CD14-positive monocyte (primary cell): ENCODE measurements at regions of chr14 and their contacts with region 1.

Region 1: GRCh38 chr14:88013750-88014349 is 8.9 kb downstream of the GPR65 start:
- DNase-seq: peak; percentile 70 to 88 (median 85)
- H3K4me3 ChIP-seq: peak overlapping the region in 1 of 3 experiments; percentile 50
- H3K4me3 Mint-ChIP-seq: peak overlapping the region in 1 of 2 donors; percentile 51
- H3K27ac ChIP-seq: peak overlapping the region in 1 of 2 donors; percentile 65
- H3K27ac Mint-ChIP-seq: peak overlapping the region in 5 of 7 donors; percentile 69 to 87 (median 81)
- H3K4me1 ChIP-seq: peaks cover 42 to 62% of the 10 kb centered on the region in 2 donors
- H3K4me1 Mint-ChIP-seq: peaks cover 69% of the 10 kb centered on the region
- H3K27me3 ChIP-seq: no peaks in the 10 kb centered on the region
- H3K27me3 Mint-ChIP-seq: peaks cover 0 to 1% (median 0%) of the 10 kb centered on the region in 3 donors
- CTCF ChIP-seq: peak; percentile 95

Region 2: GRCh38 chr14:88026890-88027289 is 13.0 kb after region 1 on chr14:
- intact Hi-C with region 1: no loop called
- DNase-seq: no peak
- H3K4me3 ChIP-seq: no peak overlapping the region
- H3K4me3 Mint-ChIP-seq: peak overlapping the region; percentile 0 to 18
- H3K27ac ChIP-seq: peak overlapping the region in 1 of 2 donors; percentile 3
- H3K27ac Mint-ChIP-seq: peak overlapping the region in 2 of 7 donors; percentile 12 to 38
- H3K4me1 ChIP-seq: peaks cover 49 to 54% of the 10 kb centered on the region in 2 donors
- H3K4me1 Mint-ChIP-seq: peaks cover 60% of the 10 kb centered on the region
- H3K27me3 ChIP-seq: no peaks in the 10 kb centered on the region
- H3K27me3 Mint-ChIP-seq: no peaks in the 10 kb centered on the region
- CTCF ChIP-seq: no peak

Region 3: GRCh38 chr14:88044851-88045339 is 31.0 kb after region 1 on chr14:
- intact Hi-C with region 1: loop called in 1 of 2 experiments (anchors 5 kb)
- DNase-seq: peak; percentile 74 to 92 (median 92)
- H3K4me3 ChIP-seq: peak overlapping the region in 1 of 3 experiments; percentile 51
- H3K4me3 Mint-ChIP-seq: peak overlapping the region; percentile 37 to 54
- H3K27ac ChIP-seq: peak overlapping the region; percentile 91 to 94
- H3K27ac Mint-ChIP-seq: peak overlapping the region; percentile 97 to 99 (median 99)
- H3K4me1 ChIP-seq: peaks cover 72 to 79% of the 10 kb centered on the region in 2 donors
- H3K4me1 Mint-ChIP-seq: peaks cover 59% of the 10 kb centered on the region
- H3K27me3 ChIP-seq: no peaks in the 10 kb centered on the region
- H3K27me3 Mint-ChIP-seq: no peaks in the 10 kb centered on the region
- CTCF ChIP-seq: no peak

Region 4: DNA sequence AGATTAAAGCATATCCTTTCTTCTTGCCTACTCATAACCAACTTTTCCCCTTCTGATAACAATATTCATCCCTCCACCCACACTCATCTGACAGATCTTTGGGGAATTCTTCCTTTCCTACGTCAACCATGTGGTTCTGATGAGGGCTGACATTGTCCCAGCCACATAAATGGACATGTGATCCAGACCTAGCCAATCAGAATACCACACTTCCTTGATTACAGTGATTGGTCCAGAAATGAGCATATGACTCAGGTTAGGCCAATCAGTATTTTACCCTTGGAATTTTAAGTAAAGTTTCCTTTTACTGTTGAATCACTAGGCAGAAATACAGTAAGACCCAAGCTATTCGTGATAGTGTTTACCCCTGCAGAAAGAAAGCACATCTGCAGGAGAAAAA is 50.0 kb after region 1 on chr14:
- intact Hi-C with region 1: loop called in 1 of 2 experiments (anchors 10 kb)
- DNase-seq: no peak
- H3K4me3 ChIP-seq: no peak overlapping the region
- H3K4me3 Mint-ChIP-seq: peak overlapping the region in 1 of 2 donors; percentile 40
- H3K27ac ChIP-seq: no peak overlapping the region
- H3K27ac Mint-ChIP-seq: no peak overlapping the region
- H3K4me1 ChIP-seq: no peaks in the 10 kb centered on the region
- H3K4me1 Mint-ChIP-seq: no peaks in the 10 kb centered on the region
- H3K27me3 ChIP-seq: peaks cover 2 to 8% of the 10 kb centered on the region in 2 donors
- H3K27me3 Mint-ChIP-seq: peaks cover 13 to 19% (median 17%) of the 10 kb centered on the region in 3 donors
- CTCF ChIP-seq: no peak

Region 5: GRCh38 chr14:88168498-88169165 is 154.8 kb after region 1 on chr14:
- intact Hi-C with region 1: loop called (anchors 5 kb)
- DNase-seq: peak; percentile 51 to 66 (median 65)
- H3K4me3 ChIP-seq: no peak overlapping the region
- H3K4me3 Mint-ChIP-seq: peak overlapping the region; percentile 45 to 67
- H3K27ac ChIP-seq: no peak overlapping the region
- H3K27ac Mint-ChIP-seq: peak overlapping the region in 1 of 7 donors; percentile 60
- H3K4me1 ChIP-seq: no peaks in the 10 kb centered on the region
- H3K4me1 Mint-ChIP-seq: peaks cover 16% of the 10 kb centered on the region
- H3K27me3 ChIP-seq: peaks cover 0 to 10% of the 10 kb centered on the region in 2 donors
- H3K27me3 Mint-ChIP-seq: peaks cover 23 to 27% (median 23%) of the 10 kb centered on the region in 3 donors
- CTCF ChIP-seq: peak; percentile 72